ENCODE measurements at regions of chr17 and their contacts with region 1.

Region 1: GRCh38 chr17:72618001-72618509 is 474.4 kb downstream of the SLC39A11 start:
- DNase-seq: peak; percentile 81

Region 2: DNA sequence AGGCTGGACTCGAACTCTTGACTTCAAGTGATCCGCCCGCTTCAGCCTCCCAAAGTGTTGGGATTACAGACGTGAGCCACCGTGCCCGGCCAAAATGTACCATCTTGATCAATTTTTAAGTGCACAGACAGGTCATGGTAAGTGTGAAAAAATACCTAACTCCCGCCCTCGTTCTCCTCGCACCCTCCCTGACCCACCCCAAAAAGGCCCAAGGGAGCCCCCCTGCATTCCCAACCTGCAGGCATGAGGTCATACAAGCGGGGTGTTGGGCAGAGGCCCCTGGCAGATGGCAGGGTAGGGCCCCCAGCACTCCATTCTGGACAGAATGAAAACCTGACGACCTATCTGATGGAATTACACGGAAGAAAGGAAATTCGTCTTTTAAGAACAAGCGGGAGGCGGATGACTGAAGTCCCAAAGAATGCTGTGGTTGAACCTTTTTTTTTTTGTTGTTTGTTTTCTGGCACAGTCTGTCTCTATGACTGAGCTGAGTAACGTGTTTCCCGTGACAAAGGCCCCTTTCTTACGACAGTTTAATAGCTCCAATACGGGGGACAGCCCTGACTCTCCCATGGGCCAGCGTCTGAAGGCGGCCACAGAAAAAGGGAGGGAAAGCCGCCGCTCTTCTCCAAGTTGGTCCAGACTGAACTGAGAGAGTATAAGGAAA is 98.0 kb after region 1 on chr17:
- in situ Hi-C with region 1: loop called (anchors 25 kb)
- DNase-seq: peak; percentile 95